AG04449 (cell line): ENCODE measurements at regions of chr7 and their contacts with region 1.

Region 1: GRCh38 chr7:92421676-92422435 is 25.4 kb upstream of the GATAD1 start:
- DNase-seq: no peak
- H3K4me3 ChIP-seq: no peak overlapping the region
- CTCF ChIP-seq: no peak

Region 2: GRCh38 chr7:92404170-92404614 is 17.7 kb before region 1 on chr7:
- CTCF ChIA-PET with region 1: interaction called, 105 read pairs
- POLR2A ChIA-PET with region 1: no interaction called
- DNase-seq: no peak
- H3K4me3 ChIP-seq: no peak overlapping the region
- CTCF ChIP-seq: no peak

Region 3: DNA sequence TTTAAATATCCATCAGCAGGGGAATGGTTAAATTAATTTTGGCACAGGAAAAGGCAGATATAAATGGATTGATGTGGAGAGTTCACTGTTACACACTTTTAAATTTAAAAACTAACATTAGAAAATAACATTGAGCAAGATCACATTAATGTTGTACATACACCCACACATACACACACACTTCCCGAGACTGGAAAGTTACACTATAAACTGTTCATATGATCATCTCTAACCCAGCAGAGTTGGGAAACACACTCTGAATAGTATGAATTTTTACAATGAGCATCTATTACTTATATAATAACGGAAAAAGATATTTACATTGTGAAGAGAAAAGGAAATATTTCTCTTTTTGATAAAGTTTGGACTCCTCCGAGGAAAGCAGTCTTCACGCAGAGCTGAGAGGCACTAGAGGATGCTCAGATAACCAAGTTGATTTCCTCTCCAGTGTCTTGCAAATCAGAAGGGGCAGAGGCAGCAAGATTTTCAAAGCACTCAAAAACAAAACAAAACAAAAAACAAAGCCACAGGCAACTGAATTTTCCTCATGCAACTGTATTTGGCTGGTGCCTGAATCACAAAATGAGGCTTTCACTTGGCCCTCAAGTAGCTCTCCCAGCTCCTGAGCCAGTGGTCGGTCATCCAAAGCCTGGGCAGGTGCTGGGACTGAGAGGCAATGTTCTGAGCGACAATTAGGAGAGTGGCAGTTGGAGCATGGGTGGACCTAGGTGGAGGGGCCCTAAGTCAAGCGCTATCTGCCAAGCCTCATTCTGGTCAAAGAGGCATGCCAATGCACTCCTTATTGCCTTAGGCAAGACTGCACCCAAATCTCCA is 15.0 kb after region 1 on chr7:
- CTCF ChIA-PET with region 1: interaction called, 24 read pairs
- POLR2A ChIA-PET with region 1: no interaction called
- DNase-seq: no peak
- H3K4me3 ChIP-seq: no peak overlapping the region
- CTCF ChIP-seq: no peak